ENCODE measurements at regions of chr11 and their contacts with region 1.

Region 1: DNA sequence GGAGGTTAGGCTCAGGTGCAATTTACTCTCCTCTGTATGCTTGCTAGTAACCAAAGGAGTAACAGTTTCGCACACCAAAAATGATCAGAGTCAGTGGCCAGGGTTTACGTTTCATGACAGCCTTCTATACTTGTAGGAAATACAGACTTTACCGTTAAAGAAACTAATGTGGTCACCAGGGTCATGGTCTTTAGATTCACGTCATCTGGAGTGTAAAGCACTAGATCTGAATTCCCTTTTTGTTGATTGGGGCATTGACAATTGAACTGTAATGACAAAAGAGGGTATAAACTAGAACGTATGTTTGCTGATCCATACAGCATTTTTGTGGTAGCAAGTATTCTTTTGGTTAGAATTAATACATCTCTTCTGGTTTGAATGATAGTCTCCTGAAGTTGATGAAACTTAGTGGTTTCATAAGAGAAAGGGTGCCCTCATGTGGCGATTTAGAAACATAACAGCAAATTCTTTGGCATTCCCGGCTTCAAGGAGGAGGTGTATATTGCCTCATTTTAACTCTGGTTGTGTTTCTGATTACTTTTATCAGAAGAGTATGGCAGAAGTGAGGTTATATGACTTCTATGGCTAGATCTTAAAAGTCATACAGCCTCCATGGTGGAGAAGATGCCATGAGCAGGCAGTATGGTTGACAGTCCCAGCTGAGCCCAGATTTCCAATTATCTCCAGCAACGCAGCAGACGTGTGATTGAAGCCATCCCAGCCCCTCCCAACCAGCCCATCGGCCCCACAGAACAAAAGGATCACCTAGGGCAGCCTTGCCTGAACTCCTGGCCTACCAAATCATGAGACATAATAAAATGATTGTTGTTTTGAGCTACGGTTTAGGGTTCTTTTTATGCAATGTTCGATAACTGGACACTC is 35.1 kb downstream of the MMP7 start:
- DNase-seq: peak; percentile 55
- CTCF ChIP-seq: no peak

Region 2: DNA sequence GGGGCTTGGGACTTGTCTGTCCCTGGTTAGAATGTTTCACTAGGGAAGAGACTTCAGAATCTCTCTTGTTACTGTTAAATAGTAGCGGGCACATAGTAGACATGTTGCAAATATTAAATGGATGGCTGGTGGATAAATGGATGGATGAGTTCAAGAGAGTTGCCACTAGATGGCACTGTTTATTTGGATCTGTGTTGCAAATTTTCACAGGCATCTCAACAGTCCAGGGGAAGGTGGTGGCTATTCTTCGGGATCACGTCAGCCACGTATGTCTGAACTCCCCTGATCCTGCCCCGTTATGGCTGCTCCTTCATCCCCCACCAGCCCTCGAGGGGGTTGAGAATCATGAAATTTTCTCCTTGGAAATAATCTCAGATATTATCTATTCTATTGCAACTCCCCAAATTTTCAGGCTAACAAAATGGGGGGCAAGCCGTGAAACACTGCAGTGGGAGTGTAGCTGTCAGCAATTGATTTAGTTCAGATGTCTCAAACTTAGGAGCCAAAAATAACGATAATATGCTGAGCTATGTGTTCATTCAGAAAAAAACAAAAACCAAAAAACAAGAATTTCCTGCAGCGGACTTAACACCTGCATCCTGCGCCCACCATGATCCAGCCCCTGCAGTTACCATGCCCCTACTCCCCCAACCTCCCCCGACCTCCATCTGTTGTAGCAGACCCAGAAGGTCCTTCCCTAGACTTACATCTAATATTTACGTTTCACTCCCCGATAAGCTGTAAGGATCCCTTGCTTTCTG is 207.3 kb before region 1 on chr11:
- in situ Hi-C with region 1: loop called (anchors 10 kb)
- DNase-seq: peak; percentile 83
- CTCF ChIP-seq: peak; percentile 62

Region 3: DNA sequence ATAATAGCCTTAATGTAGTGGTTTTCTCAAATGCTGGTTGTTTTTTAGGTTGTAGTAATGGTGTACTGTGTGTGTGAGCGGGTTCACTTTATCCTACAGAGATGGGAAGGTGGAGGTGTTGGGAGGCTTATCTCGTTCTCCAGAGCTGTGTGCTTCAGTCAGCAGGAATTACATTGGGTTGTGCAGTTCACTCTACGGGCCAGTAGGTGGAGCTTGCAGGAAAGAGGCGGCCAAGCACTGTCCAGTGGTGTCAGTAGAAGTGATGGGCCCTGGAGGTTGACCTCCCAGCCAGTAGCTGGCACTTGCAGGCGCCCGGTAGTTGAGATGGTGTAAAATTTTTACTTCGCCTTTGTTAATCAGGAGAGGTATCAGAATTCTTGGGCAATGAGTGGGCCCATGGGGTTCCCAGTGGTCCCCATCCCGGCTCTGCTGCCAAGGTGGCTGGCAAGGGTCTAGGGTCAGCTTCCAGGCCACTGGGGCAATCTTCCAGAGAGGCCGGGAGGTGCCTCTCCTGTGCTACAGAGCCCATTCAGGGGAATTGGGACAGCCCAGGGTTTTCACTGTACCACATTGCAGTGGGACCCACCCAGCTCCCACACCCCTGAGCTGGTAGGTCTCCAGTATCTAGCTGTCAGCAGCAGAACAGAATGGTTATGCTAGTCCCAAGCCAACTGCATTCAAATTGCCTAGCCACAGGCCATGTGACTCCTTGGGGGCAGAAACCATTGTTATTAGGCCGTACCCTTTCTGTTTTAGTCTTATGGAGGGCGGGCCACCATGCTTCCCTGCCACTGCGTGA is 104.5 kb before region 1 on chr11:
- in situ Hi-C with region 1: loop called (anchors 25 kb)
- DNase-seq: peak; percentile 68
- CTCF ChIP-seq: peak; percentile 74

Region 4: DNA sequence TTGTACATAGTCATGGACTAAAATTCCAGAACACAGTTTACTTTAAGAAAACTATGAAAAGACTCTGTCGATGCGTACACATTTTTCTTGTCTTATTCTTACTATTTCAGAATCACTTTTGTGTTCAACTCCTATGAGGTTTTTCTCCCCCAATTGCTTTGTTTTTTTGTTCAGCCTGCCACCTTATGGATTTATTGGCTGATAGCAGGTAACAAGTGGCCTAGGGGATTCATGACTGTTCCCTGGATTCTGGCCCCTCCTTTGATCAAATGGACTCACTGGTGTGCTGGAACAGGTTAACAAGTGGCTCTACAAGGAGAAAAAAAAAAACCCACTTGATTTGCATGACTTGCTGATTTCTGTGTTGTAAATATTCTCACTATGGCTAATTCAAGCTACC is 119.1 kb after region 1 on chr11:
- in situ Hi-C with region 1: loop called (anchors 5 kb)
- DNase-seq: no peak
- CTCF ChIP-seq: peak; percentile 23

Region 5: GRCh38 chr11:102637731-102638130 is 142.3 kb after region 1 on chr11:
- in situ Hi-C with region 1: no loop called
- DNase-seq: no peak
- CTCF ChIP-seq: no peak

Measured in GM13976 (cell line).